ENCODE measurements at regions of chr7 and their contacts with region 1.

Region 1: DNA sequence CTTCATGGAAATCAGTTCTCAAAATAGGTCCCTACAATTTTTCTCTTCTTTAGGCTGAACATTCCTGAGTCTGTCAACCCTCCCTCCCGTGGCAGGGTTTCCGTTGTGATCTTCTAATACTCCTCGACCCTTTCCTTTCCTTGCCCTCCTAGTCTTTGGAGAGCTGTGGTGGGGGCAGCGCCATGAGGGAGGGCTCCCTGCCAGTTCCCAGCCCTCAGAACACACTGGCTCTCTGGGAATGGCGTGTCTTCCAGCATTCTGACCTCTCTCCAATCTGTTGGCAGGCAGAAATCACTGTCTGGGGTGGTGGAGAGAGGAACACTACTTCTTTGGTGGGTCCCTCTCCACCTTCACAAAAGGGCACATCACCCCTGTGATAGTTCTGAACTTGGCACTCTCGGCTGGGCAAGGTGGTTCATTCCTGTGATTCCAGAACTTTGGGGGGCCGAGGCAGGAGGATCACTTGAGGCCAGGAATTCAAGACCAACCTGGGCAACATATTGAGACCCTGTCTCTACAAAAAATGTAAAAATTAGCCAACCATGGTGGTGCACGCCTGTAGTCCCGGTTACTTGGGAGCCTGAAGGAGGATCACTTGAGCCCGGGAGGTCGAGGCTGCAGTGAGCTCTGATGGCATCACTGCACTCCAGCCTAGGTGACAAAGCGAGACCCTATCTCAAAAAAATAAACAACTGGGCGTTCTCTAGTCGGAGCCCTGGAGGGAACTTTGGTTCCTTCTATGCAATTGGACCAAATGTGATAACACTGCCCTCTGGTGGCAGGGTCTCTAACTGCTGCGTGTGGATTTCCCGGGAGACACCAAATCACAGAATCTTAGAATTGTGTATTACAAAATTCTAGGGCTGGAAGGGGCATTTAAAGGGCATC is 13.1 kb upstream of the ARPC1A start:
- DNase-seq: peak; percentile 63 to 94
- H3K4me3 ChIP-seq: no peak overlapping the region
- CTCF ChIP-seq: peak in 1 of 3 donors; percentile 78
- POLR2A ChIP-seq: no peak

Region 2: GRCh38 chr7:99040104-99040958 is 272.2 kb before region 1 on chr7:
- intact Hi-C with region 1: loop called (anchors 5 kb)
- DNase-seq: peak; percentile 88 to 96
- H3K4me3 ChIP-seq: no peak overlapping the region
- CTCF ChIP-seq: peak in 1 of 3 donors; percentile 79
- POLR2A ChIP-seq: no peak

Region 3: DNA sequence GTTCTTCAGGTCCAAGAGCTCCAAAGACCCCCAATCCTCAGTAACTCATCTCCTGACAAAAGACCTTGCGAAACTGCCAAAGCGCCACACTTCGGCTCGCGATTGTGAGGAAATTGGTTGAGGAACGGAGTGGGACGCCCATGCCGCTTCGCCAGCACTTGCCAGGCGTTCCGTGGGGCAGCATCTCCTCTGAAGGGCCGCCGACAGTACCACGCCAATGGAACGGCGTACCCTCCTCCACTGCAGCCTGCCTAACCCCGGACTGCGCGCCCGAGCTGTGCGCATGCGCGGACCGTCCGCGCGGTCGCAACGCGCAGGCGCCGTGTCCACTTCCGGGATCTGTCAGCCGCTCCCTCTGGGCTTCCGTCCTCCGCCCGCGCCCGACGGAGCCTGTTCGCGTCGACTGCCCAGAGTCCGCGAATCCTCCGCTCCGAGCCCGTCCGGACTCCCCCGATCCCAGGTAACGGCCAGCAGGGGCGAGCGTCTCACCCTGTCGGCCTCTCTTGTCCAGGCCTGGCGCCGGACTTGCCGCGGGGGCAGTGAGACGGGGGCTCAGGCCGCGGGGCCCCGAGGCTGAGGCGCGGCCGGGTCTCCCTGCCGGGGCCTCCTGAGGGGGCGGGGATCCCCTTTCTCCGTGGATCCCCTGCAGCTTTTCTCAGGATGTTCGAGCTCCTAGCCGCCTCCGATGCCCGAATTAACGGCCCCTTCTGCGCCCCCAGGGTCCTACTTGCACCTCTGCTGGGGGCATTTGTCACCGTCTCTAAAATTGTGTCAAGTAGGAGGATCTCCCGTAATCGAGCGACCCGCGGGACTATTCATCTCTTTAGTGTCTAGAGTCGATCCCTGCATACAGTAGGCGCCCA is 13.2 kb after region 1 on chr7 and contains the start of gene ARPC1A:
- intact Hi-C with region 1: no loop called
- DNase-seq: peak; percentile 79 to 97
- H3K4me3 ChIP-seq: peak within 1 kb of the TSS; percentile 97
- CTCF ChIP-seq: no peak
- POLR2A ChIP-seq: peak in 1 of 2 donors; percentile 35
- total RNA-seq, gene ARPC1A: 108 to 140 (median 123) TPM